ENCODE measurements at regions of chr5 and their contacts with region 1.

Region 1: GRCh38 chr5:135488727-135489465 is 36.7 kb upstream of the TIFAB start:
- DNase-seq: no peak
- H3K4me3 ChIP-seq: peak overlapping the region in 3 of 7 experiments; percentile 15 to 52 (median 38)
- H3K27ac ChIP-seq: no peak overlapping the region
- H3K4me1 ChIP-seq: peaks cover 0 to 38% (median 28%) of the 10 kb centered on the region in 4 experiments
- H3K27me3 ChIP-seq: peaks cover 0 to 92% (median 45%) of the 10 kb centered on the region in 5 experiments

Region 2: GRCh38 chr5:135441350-135441831 is 47.5 kb before region 1 on chr5:
- CTCF ChIA-PET with region 1: no interaction called
- POLR2A ChIA-PET with region 1: no interaction called
- DNase-seq: peak; percentile 38 to 86 (median 81)
- H3K4me3 ChIP-seq: no peak overlapping the region
- H3K27ac ChIP-seq: peak overlapping the region in 1 of 2 experiments; percentile 12
- H3K4me1 ChIP-seq: peaks cover 5 to 95% (median 72%) of the 10 kb centered on the region in 4 experiments
- H3K27me3 ChIP-seq: no peaks in the 10 kb centered on the region

Region 3: GRCh38 chr5:135501965-135502364 is 13.1 kb after region 1 on chr5:
- CTCF ChIA-PET with region 1: interaction called, 11 read pairs
- POLR2A ChIA-PET with region 1: no interaction called
- DNase-seq: no peak
- H3K4me3 ChIP-seq: no peak overlapping the region
- H3K27ac ChIP-seq: no peak overlapping the region
- H3K4me1 ChIP-seq: no peaks in the 10 kb centered on the region
- H3K27me3 ChIP-seq: peaks cover 0 to 48% (median 19%) of the 10 kb centered on the region in 5 experiments